ENCODE measurements at regions of chr2 and their contacts with region 1.

Region 1: GRCh38 chr2:20378792-20379519 is 28.3 kb upstream of the PUM2 start:
- DNase-seq: peak; percentile 85 to 87
- ATAC-seq: peak; percentile 92 to 99 (median 96)
- H3K4me3 ChIP-seq: no peak overlapping the region
- H3K27ac ChIP-seq: peak overlapping the region in 6 of 10 donors; percentile 31 to 58 (median 52)
- H3K4me1 ChIP-seq: peaks cover 3 to 29% (median 16%) of the 10 kb centered on the region in 9 donors
- H3K27me3 ChIP-seq: no peaks in the 10 kb centered on the region
- CTCF ChIP-seq: peak; percentile 67 to 92 (median 79)

Region 2: DNA sequence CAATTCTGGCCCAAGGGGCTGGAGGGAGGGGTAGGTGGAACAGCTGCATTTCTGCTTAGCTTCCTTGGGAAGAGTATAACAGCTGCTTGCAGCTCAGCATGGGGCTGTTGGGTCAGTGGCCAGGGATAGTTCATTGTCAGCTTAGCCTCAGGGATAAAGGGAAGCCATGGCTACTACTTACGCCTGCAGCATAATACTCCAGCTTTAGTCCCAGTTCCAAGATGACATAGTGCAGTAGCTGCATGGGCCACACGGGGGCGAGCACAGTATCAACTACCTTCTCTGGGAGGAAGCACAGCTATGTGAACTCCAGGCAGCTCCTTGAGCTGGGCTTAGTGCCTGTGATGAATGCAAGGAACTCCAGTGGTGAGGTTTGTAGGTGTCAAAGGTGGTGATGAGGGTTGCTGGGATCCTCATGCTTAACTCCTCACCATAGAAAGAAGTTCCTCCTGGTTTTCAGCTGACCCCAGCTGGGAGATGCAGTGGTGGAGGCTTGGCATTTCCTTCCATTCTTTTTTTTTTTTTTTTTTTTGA is 32.5 kb after region 1 on chr2:
- intact Hi-C with region 1: loop called in 1 of 10 experiments (anchors 2 kb)
- DNase-seq: peak; percentile 89
- ATAC-seq: peak; percentile 89 to 96 (median 94)
- H3K4me3 ChIP-seq: no peak overlapping the region
- H3K27ac ChIP-seq: no peak overlapping the region
- H3K4me1 ChIP-seq: peaks cover 0 to 8% (median 0%) of the 10 kb centered on the region in 9 donors
- H3K27me3 ChIP-seq: no peaks in the 10 kb centered on the region
- CTCF ChIP-seq: peak; percentile 67 to 89 (median 79)

Region 3: DNA sequence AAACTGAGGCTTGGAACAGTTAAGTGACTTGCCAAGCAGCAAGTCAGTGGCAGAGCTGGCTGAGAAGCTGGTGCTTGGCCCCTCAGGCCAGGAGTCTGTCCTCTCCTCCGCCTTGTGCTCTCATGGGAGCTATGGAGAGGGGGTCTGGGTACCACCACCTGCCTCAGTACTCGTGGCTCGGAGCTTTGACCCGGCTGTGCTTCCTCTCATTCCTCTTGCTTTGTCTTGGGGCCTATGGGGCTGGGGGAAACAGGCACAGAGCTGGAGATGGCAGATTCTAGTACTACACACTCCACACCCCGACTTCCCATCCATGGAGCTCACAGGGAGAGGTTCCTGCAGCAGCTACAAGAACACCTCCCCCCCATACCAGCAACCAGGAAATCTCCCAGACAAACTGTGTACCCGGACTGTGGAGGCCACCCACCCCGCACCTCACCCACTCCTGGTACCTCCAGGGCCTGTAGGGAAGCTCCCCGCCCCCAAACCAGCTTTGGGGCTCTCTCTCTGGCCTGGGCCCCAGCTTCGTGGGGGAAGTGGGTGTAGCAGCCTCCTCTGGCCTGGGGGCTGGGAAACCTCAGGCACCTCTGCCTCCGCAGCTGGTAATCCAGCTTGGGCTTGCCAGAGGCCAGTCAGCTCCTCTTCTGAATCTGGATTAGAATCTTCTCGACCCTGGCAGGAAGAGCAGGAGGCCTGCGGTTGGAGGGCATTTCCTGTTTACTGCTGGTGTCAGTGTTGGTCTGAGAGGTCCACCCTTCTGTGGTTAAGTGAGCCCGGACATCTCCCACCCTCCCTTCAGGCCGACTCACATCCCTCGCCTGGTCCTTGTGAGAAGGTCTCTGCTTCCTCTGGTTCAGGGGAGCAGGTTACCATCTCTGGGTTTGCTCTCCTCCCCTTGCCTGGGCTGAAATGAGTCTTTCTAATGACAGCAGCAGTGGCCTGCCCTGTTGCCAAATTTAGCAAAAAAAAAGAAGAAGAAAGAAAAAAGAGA is 45.6 kb after region 1 on chr2:
- intact Hi-C with region 1: loop called in 1 of 10 experiments (anchors 5 kb)
- DNase-seq: peak; percentile 50 to 55
- ATAC-seq: peak in 7 of 8 donors; percentile 19 to 47 (median 32)
- H3K4me3 ChIP-seq: peak overlapping the region in 2 of 10 donors; percentile 5 to 37
- H3K27ac ChIP-seq: peak overlapping the region in 6 of 10 donors; percentile 52 to 93 (median 62)
- H3K4me1 ChIP-seq: peaks cover 6 to 65% (median 33%) of the 10 kb centered on the region in 9 donors
- H3K27me3 ChIP-seq: no peaks in the 10 kb centered on the region
- CTCF ChIP-seq: no peak

Region 4: GRCh38 chr2:20438334-20439192 is 59.6 kb after region 1 on chr2:
- intact Hi-C with region 1: loop called in 1 of 10 experiments (anchors 5 kb)
- DNase-seq: no peak
- ATAC-seq: peak in 7 of 8 donors; percentile 39 to 88 (median 64)
- H3K4me3 ChIP-seq: no peak overlapping the region
- H3K27ac ChIP-seq: peak overlapping the region in 7 of 10 donors; percentile 22 to 91 (median 40)
- H3K4me1 ChIP-seq: peaks cover 0 to 39% (median 8%) of the 10 kb centered on the region in 9 donors
- H3K27me3 ChIP-seq: no peaks in the 10 kb centered on the region
- CTCF ChIP-seq: no peak

Region 5: DNA sequence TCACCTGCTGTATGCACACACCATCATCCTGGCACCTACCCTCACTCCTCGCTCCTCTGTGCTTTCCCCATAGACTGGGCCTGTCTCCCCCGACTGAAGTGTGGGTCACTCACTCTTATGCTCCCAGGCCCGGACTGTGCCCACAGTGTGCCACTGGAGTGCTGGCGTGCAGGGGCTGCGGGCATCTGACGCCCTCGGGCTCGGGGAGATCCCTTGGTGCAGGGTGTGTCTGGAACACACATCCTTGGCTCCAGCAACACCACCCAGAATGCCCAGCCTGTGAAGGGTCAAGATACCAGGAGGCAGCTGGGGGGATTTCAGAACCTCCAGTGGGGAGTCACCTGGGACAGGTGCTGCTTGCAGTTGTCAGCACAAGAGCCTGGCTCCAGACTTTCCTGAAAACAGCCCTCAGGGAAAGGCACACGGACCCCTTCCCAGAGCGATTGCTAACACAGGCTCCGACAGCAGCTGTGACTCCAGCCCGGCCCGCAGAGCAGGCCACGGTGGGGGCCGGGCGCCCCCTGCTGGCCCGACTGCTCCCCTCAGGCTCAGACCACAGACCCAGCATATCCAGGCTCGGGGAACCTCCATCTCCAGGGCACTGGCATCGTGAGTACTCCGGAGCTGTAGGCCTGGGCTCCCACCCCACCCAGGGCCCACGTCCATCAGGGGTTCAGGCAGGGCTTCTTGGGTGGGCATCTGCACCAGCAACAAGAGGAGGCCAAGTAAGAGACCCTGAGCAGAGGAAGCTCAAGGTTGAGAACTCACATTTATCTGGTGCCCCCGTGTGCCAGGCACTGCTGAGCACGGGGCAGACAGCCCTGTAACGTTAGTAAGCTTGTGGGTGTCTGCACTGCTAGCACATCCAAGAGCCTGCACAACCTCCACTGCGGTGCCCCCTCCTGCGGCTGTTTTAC is 263.4 kb after region 1 on chr2:
- intact Hi-C with region 1: loop called in 1 of 10 experiments (anchors 5 kb)
- DNase-seq: peak; percentile 71 to 85
- ATAC-seq: peak; percentile 81 to 95 (median 93)
- H3K4me3 ChIP-seq: no peak overlapping the region
- H3K27ac ChIP-seq: peak overlapping the region in 7 of 10 donors; percentile 5 to 61 (median 50)
- H3K4me1 ChIP-seq: peaks cover 5 to 48% (median 31%) of the 10 kb centered on the region in 9 donors
- H3K27me3 ChIP-seq: no peaks in the 10 kb centered on the region
- CTCF ChIP-seq: peak; percentile 92 to 98 (median 97)